Activated CD8-positive, alpha-beta T cell treated with anti-CD3 and anti-CD28 coated beads for 36 hours (primary cell): ENCODE measurements at regions of chr10 and their contacts with region 1.

Region 1: GRCh38 chr10:132654702-132655661 is 117.4 kb downstream of the INPP5A start:
- DNase-seq: peak; percentile 73
- ATAC-seq: peak; percentile 84
- H3K4me3 Mint-ChIP-seq: no peak overlapping the region
- H3K27ac Mint-ChIP-seq: no peak overlapping the region
- H3K4me1 Mint-ChIP-seq: no peaks in the 10 kb centered on the region
- H3K27me3 Mint-ChIP-seq: no peaks in the 10 kb centered on the region
- CTCF ChIP-seq: peak; percentile 94

Region 2: GRCh38 chr10:132696728-132697577 is 42.0 kb after region 1 on chr10:
- CTCF ChIA-PET with region 1: interaction called, 13 read pairs
- POLR2A ChIA-PET with region 1: no interaction called
- intact Hi-C with region 1: no loop called
- DNase-seq: no peak
- ATAC-seq: no peak
- H3K4me3 Mint-ChIP-seq: no peak overlapping the region
- H3K27ac Mint-ChIP-seq: no peak overlapping the region
- H3K4me1 Mint-ChIP-seq: peaks cover 6% of the 10 kb centered on the region
- H3K27me3 Mint-ChIP-seq: no peaks in the 10 kb centered on the region
- CTCF ChIP-seq: no peak

Region 3: GRCh38 chr10:132793871-132794849 is 139.2 kb after region 1 on chr10:
- CTCF ChIA-PET with region 1: interaction called, 4 read pairs
- POLR2A ChIA-PET with region 1: no interaction called
- intact Hi-C with region 1: loop called (anchors 10 kb)
- DNase-seq: no peak
- ATAC-seq: no peak
- H3K4me3 Mint-ChIP-seq: no peak overlapping the region
- H3K27ac Mint-ChIP-seq: no peak overlapping the region
- H3K4me1 Mint-ChIP-seq: no peaks in the 10 kb centered on the region
- H3K27me3 Mint-ChIP-seq: peaks cover 7% of the 10 kb centered on the region
- CTCF ChIP-seq: no peak